PC-3 (cell line): ENCODE measurements at regions of chr6 and their contacts with region 1.

Region 1: GRCh38 chr6:33490209-33490608 is 35.8 kb downstream of the ZBTB9 start:
- DNase-seq: peak; percentile 47
- ATAC-seq: peak; percentile 90
- H3K4me3 ChIP-seq: no peak overlapping the region
- H3K27ac ChIP-seq: no peak overlapping the region
- H3K4me1 ChIP-seq: no peaks in the 10 kb centered on the region
- H3K27me3 ChIP-seq: no peaks in the 10 kb centered on the region
- CTCF ChIP-seq: peak; percentile 24; the same call in 1 of the 2 replicates

Region 2: GRCh38 chr6:31729515-31729978 is 1760.7 kb before region 1 on chr6:
- CTCF ChIA-PET with region 1: no interaction called
- POLR2A ChIA-PET with region 1: no interaction called
- intact Hi-C with region 1: no loop called
- DNase-seq: peak; percentile 82
- ATAC-seq: peak; percentile 76
- H3K4me3 ChIP-seq: peak overlapping the region; percentile 77
- H3K27ac ChIP-seq: peak overlapping the region; percentile 30
- H3K4me1 ChIP-seq: peaks cover 11% of the 10 kb centered on the region
- H3K27me3 ChIP-seq: no peaks in the 10 kb centered on the region
- CTCF ChIP-seq: peak; percentile 88; the same call in 1 of the 2 replicates

Region 3: GRCh38 chr6:33683051-33683571 is 192.9 kb after region 1 on chr6:
- CTCF ChIA-PET with region 1: interaction called, 10 read pairs
- POLR2A ChIA-PET with region 1: no interaction called
- intact Hi-C with region 1: no loop called
- DNase-seq: no peak
- ATAC-seq: no peak
- H3K4me3 ChIP-seq: no peak overlapping the region
- H3K27ac ChIP-seq: no peak overlapping the region
- H3K4me1 ChIP-seq: no peaks in the 10 kb centered on the region
- H3K27me3 ChIP-seq: no peaks in the 10 kb centered on the region
- CTCF ChIP-seq: no peak

Region 4: GRCh38 chr6:33751771-33752645 is 261.8 kb after region 1 on chr6:
- CTCF ChIA-PET with region 1: no interaction called
- POLR2A ChIA-PET with region 1: no interaction called
- intact Hi-C with region 1: no loop called
- DNase-seq: no peak
- ATAC-seq: peak; percentile 46
- H3K4me3 ChIP-seq: no peak overlapping the region
- H3K27ac ChIP-seq: no peak overlapping the region
- H3K4me1 ChIP-seq: peaks cover 6% of the 10 kb centered on the region; the same call in 1 of the 2 replicates
- H3K27me3 ChIP-seq: no peaks in the 10 kb centered on the region
- CTCF ChIP-seq: no peak